ENCODE measurements at regions of chr12 and their contacts with region 1.

Region 1: GRCh38 chr12:68358532-68359485 is 26.6 kb upstream of the MDM1 start:
- DNase-seq: peak; percentile 83
- ATAC-seq: peak; percentile 91
- H3K4me3 Mint-ChIP-seq: no peak overlapping the region
- H3K27ac Mint-ChIP-seq: no peak overlapping the region
- H3K4me1 Mint-ChIP-seq: peaks cover 21% of the 10 kb centered on the region
- H3K27me3 Mint-ChIP-seq: no peaks in the 10 kb centered on the region
- CTCF ChIP-seq: peak; percentile 72

Region 2: DNA sequence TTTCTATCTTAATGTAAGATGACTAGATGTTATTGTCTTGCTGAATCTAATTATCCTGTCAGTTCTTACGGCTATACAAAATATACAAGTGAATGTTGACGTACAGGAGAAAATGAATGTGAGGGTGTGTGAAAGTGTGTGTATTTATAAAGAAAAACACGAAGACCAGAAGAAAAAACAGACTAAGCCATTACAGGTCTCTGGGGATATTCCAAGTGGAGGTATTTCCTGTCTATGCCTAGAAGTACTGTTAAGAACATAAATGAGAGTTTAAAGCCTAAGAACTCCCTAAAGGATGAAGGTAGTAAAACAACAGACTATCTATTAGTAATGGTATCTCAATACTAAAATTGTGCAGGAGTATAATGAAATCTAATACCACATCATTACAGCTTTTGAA is 34.3 kb before region 1 on chr12:
- CTCF ChIA-PET with region 1: no interaction called
- POLR2A ChIA-PET with region 1: no interaction called
- intact Hi-C with region 1: no loop called
- DNase-seq: no peak
- ATAC-seq: no peak
- H3K4me3 Mint-ChIP-seq: no peak overlapping the region
- H3K27ac Mint-ChIP-seq: no peak overlapping the region
- H3K4me1 Mint-ChIP-seq: peaks cover 9% of the 10 kb centered on the region
- H3K27me3 Mint-ChIP-seq: no peaks in the 10 kb centered on the region
- CTCF ChIP-seq: no peak

Region 3: GRCh38 chr12:68420225-68421010 is 61.6 kb after region 1 on chr12:
- CTCF ChIA-PET with region 1: no interaction called
- POLR2A ChIA-PET with region 1: no interaction called
- intact Hi-C with region 1: no loop called
- DNase-seq: no peak
- ATAC-seq: peak; percentile 61
- H3K4me3 Mint-ChIP-seq: no peak overlapping the region
- H3K27ac Mint-ChIP-seq: peak overlapping the region; percentile 32
- H3K4me1 Mint-ChIP-seq: peaks cover 33% of the 10 kb centered on the region
- H3K27me3 Mint-ChIP-seq: no peaks in the 10 kb centered on the region
- CTCF ChIP-seq: no peak

Region 4: GRCh38 chr12:68686595-68687521 is 328.0 kb after region 1 on chr12 and contains the start of gene NUP107:
- CTCF ChIA-PET with region 1: interaction called, 7 read pairs
- POLR2A ChIA-PET with region 1: no interaction called
- intact Hi-C with region 1: loop called (anchors 2 kb)
- DNase-seq: peak; percentile 98
- ATAC-seq: peak; percentile 94
- H3K4me3 Mint-ChIP-seq: peak within 1 kb of the TSS; percentile 97
- H3K27ac Mint-ChIP-seq: peak within 1 kb of the TSS; percentile 99
- H3K4me1 Mint-ChIP-seq: peaks cover 44% of the 10 kb centered on the region
- H3K27me3 Mint-ChIP-seq: no peaks in the 10 kb centered on the region
- CTCF ChIP-seq: no peak
- total RNA-seq, gene NUP107: 142 to 143 TPM

Measured in activated CD8-positive, alpha-beta T cell treated with anti-CD3 and anti-CD28 coated beads for 36 hours (primary cell).